ENCODE measurements at regions of chr3 and their contacts with region 1.

Region 1: DNA sequence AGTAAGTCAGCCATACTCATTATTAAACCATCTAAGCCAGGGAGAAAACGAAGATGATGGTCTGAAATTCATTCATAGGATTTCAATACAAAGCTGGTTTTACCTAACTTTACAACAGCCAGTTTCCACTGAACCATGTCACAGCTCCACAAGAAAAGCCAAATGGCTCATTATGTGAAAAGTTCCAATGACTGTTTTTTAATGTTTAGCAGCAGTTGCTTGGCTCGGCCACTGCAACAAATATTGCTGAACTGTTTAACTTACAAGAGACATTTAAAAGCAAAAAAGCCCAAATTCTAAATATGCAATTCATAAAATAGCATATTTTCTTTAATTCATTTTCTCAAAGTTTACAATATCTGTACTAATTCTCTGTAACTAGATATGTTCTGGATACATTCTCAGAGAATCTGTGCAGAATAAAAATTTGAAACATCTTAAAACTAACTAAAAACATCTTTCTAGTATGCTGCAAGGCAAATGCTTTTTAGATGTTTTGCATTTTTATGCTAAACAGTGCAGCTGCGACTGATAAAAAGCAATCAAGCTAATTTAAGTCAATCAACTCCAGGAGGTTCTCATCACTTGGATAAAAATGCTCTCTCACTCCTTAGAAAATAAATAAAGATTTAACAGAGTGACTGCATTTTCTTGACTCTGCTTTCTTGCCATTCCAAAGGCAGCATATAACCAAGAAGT is 356.5 kb downstream of the ERC2 start:
- DNase-seq: no peak
- H3K4me3 ChIP-seq: no peak overlapping the region
- H3K27ac ChIP-seq: no peak overlapping the region
- H3K4me1 ChIP-seq: no peaks in the 10 kb centered on the region
- H3K27me3 ChIP-seq: no peaks in the 10 kb centered on the region
- CTCF ChIP-seq: no peak

Region 2: GRCh38 chr3:55601366-55602080 is 510.2 kb before region 1 on chr3:
- CTCF ChIA-PET with region 1: no interaction called
- POLR2A ChIA-PET with region 1: no interaction called
- intact Hi-C with region 1: no loop called
- DNase-seq: no peak
- H3K4me3 ChIP-seq: no peak overlapping the region
- H3K27ac ChIP-seq: no peak overlapping the region
- H3K4me1 ChIP-seq: peaks cover 9% of the 10 kb centered on the region
- H3K27me3 ChIP-seq: no peaks in the 10 kb centered on the region
- CTCF ChIP-seq: no peak

Region 3: GRCh38 chr3:56189536-56189935 is 77.8 kb after region 1 on chr3:
- CTCF ChIA-PET with region 1: no interaction called
- POLR2A ChIA-PET with region 1: no interaction called
- intact Hi-C with region 1: no loop called
- DNase-seq: no peak
- H3K4me3 ChIP-seq: no peak overlapping the region
- H3K27ac ChIP-seq: no peak overlapping the region
- H3K4me1 ChIP-seq: no peaks in the 10 kb centered on the region
- H3K27me3 ChIP-seq: no peaks in the 10 kb centered on the region
- CTCF ChIP-seq: no peak

Region 4: DNA sequence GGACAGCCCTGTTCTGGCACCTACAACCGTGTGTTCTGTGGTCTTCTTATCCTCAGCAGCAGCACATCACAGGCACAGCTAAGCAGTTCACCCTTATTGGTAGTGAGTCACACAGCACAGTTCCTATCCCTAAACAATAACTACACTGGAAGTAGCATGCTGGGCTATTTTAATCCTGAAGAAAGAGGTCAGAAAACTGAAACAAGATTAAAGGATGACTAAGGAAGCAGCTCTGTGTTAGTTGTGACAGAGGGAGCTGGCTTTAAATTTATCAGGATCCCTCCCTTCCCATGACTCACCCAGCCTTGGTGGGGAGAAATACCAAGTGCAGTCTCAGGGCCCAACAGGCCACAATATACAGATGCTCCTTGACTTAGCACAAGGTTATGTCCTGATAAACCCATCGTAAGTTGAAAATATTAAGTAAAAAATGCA is 212.2 kb after region 1 on chr3:
- CTCF ChIA-PET with region 1: no interaction called
- POLR2A ChIA-PET with region 1: interaction called, 12 read pairs
- intact Hi-C with region 1: no loop called
- DNase-seq: peak; percentile 83
- H3K4me3 ChIP-seq: no peak overlapping the region
- H3K27ac ChIP-seq: no peak overlapping the region
- H3K4me1 ChIP-seq: no peaks in the 10 kb centered on the region
- H3K27me3 ChIP-seq: no peaks in the 10 kb centered on the region
- CTCF ChIP-seq: no peak

Region 5: DNA sequence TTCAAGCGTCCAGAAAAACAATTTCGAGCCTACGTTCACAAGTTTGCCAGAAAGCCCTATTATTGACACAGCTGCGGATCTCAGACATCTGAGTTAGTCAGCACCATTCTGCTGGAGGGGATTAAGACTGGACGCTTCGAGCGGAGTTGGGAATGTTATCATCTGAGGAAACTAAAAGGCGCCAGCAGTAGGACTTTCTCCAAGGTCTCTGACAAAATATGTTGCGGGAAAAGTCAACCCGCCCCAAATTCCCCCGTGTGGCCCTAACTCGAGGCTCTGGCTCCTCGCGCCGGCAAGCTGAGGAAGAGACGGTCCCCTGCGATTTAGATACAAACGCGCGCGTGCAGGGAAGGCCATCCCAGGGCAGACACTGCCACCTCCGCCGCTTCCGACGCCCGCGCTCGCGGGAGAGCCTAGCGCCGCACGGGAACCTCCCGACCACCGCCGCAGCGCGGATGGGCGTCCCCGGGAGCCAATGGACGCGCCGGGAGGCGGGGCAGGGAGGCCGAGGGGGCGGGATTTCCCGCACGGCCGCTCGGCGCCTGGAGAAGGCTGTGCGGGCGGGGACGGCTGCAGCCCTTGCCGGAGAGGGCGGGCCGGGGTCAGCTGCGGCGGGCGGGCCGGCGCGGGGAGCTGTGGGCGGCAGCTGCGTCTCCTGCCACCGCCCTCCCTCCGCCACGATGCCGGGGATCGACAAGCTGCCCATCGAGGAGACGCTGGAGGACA is 1115.6 kb after region 1 on chr3 and contains the start of gene APPL1:
- CTCF ChIA-PET with region 1: no interaction called
- POLR2A ChIA-PET with region 1: no interaction called
- intact Hi-C with region 1: no loop called
- DNase-seq: peak; percentile 86
- H3K4me3 ChIP-seq: peak within 1 kb of the TSS; percentile 71
- H3K27ac ChIP-seq: peak within 1 kb of the TSS; percentile 61
- H3K4me1 ChIP-seq: peaks cover 5% of the 10 kb centered on the region
- H3K27me3 ChIP-seq: no peaks in the 10 kb centered on the region
- CTCF ChIP-seq: no peak
- total RNA-seq, gene APPL1: 20.7 and 22.3 TPM in 2 replicates

Region 6: DNA sequence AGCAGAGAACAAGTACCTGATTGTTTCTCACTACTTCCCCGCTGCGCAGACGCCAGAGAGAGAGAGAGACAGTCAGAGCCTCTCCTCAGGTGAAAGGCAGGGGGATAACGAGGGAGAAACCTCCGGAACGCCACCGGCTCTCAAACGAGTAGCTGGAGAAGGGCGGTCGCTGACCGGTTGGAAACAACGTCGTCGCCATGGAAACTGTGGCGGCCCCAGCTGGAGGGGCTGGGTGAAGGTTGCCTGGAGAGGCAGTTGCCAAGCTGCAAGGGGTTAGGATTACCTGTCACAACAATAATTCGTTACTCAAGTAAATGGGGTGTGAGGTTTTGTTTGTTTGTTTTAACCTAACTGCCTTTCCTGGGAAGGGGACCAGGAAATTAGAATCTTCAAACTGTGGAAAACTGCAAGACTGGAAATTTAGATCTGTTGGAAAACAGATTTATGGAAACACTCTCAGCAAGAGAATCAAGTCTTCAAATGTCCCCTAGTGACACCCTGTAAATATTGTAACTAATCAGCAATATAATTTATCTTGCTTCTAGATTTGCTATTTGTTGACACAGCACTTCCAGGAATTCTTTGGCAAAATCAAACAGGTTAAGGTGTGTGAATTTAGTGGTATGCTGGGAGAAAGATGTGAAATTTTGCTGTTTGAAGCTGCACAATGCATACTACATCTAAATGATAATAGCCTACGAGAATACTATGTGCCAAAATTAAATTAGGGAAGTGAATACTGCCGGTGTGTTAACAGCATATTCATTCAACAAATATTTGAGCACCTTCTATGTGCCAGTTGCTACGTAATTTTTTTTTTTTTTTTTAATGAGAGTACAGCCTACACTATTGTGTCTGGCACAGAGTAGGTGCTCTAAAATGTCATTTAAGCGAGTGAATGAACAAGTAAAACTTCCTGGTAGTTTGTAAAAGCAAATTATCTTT is 1432.7 kb after region 1 on chr3 and contains the start of gene DNAH12:
- CTCF ChIA-PET with region 1: no interaction called
- POLR2A ChIA-PET with region 1: no interaction called
- intact Hi-C with region 1: no loop called
- DNase-seq: peak; percentile 4
- H3K4me3 ChIP-seq: no peak within 1 kb of the TSS
- H3K27ac ChIP-seq: no peak within 1 kb of the TSS
- H3K4me1 ChIP-seq: no peaks in the 10 kb centered on the region
- H3K27me3 ChIP-seq: no peaks in the 10 kb centered on the region
- CTCF ChIP-seq: no peak
- total RNA-seq, gene DNAH12: not detected in 2 replicates

Measured in A673 (cell line).